Activated naive CD4-positive, alpha-beta T cell treated with anti-CD3 and anti-CD28 coated beads, Interleukin-2, amount 10 ng/mL, durations not matched to agents 7 days and 5 days (primary cell): ENCODE measurements at regions of chrX and their contacts with region 1.

Region 1: DNA sequence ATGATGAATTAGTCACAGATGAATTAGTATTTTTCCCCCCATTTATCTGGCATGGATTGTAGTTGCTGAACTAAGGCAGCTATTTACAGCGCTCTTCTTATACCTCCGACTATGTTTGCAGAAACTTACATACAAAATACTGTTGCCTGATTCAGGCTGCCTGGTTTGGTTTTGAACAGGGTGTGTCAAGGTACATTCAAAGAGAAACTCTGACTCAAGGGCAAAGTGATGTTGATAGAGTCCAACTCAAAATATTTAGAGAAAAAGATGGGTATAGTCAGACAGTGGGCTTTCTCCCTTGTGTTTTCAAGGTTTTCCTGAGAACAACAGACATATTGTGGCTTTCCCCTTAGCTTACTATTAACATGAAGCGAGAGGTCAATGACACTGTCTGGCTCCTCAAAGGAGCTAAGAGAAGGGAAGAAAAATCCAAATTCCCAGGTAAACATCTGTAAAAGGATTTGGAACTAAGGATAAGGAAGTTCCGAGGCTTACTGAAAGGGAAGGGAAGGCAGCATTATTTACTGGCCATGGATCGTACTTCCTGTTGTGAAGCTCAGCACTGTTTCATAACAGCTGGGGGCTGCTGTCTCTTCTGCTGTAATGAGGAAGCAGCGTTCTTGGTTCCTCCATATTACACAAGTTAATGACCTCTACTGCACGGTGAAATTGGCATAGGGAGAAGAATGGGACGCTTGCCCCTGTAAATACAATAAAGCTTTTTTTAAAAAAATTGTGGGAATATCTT is 30.9 kb downstream of the FAM9C start:
- DNase-seq: peak; percentile 36
- H3K4me3 Mint-ChIP-seq: peak overlapping the region; percentile 17
- H3K27ac Mint-ChIP-seq: peak overlapping the region; percentile 88
- H3K4me1 Mint-ChIP-seq: peaks cover 70% of the 10 kb centered on the region
- H3K27me3 Mint-ChIP-seq: no peaks in the 10 kb centered on the region

Region 2: DNA sequence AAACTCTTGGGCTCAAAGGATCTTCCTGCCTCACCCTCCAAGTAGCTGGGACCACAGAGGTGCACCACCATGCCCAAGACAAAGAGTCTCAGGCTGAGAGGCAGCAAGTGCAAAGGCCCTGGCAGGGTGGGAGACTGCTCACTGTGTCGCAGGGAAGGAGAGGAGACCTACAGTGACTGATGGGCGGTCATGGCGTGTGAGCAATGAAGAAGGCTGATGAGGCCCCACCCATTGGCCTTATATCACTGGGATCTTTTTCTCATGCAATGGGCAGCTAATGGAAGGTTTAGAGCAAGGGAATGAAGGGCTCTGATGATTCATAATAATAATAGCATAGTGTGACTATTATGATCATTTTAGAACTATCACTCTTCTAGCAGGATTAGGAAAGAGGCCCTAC is 10.0 kb after region 1 on chrX:
- CTCF ChIA-PET with region 1: interaction called, 13 read pairs
- DNase-seq: no peak
- H3K4me3 Mint-ChIP-seq: no peak overlapping the region
- H3K27ac Mint-ChIP-seq: no peak overlapping the region
- H3K4me1 Mint-ChIP-seq: peaks cover 52% of the 10 kb centered on the region
- H3K27me3 Mint-ChIP-seq: no peaks in the 10 kb centered on the region